H1 (cell line): ENCODE measurements at regions of chr5 and their contacts with region 1.

Region 1: GRCh38 chr5:122704243-122705036 is 70.4 kb upstream of the SNX2 start:
- DNase-seq: no peak
- H3K4me3 ChIP-seq: no peak overlapping the region
- H3K27ac ChIP-seq: no peak overlapping the region
- H3K4me1 ChIP-seq: no peaks in the 10 kb centered on the region
- H3K27me3 ChIP-seq: no peaks in the 10 kb centered on the region
- CTCF ChIP-seq: peak in 2 of 3 experiments; percentile 28 to 52; a peak in 2 of 4 replicates
- EP300 ChIP-seq: no peak
- POLR2A ChIP-seq: no peak
- RAD21 ChIP-seq: peak; percentile 43 to 50

Region 2: DNA sequence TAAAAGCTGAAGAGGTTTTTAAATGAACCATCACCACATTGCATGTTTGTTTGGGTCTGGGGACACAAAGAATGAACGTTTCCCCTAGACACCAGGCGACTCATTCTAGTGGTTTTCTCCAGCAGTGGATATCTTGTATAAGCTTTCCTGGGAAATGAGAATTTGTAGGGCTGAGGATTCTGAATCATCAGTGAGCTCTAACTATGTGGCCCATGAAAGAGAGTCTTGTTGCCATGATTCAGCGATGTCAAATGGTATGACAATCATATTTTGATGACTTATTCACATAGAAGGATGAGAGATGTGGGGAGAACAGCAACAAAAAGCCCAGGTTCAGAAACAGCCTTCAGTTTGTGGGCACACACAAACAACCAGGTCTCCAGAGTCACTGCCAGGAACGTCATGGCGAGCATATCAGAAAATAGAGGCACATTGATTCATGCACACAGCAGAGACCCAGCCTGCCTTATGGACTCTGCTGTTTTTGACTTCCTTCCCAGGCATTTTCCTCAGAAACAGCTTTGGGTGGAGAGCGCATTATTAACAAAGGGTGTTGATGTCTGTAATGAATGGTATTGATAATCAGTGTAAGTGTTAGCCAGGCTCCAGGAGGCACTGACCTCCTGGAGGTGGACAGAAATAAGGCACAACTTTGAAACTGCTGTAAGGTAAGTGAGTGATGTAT is 561.8 kb before region 1 on chr5:
- CTCF ChIA-PET with region 1: no interaction called
- POLR2A ChIA-PET with region 1: no interaction called
- DNase-seq: no peak
- H3K4me3 ChIP-seq: no peak overlapping the region
- H3K27ac ChIP-seq: no peak overlapping the region
- H3K4me1 ChIP-seq: no peaks in the 10 kb centered on the region
- H3K27me3 ChIP-seq: no peaks in the 10 kb centered on the region
- CTCF ChIP-seq: no peak
- EP300 ChIP-seq: no peak
- POLR2A ChIP-seq: no peak
- RAD21 ChIP-seq: no peak

Region 3: GRCh38 chr5:122507045-122507444 is 197.4 kb before region 1 on chr5:
- CTCF ChIA-PET with region 1: interaction called, 11 read pairs
- POLR2A ChIA-PET with region 1: no interaction called
- DNase-seq: no peak
- H3K4me3 ChIP-seq: no peak overlapping the region
- H3K27ac ChIP-seq: no peak overlapping the region
- H3K4me1 ChIP-seq: no peaks in the 10 kb centered on the region
- H3K27me3 ChIP-seq: no peaks in the 10 kb centered on the region
- CTCF ChIP-seq: no peak
- EP300 ChIP-seq: no peak
- POLR2A ChIP-seq: no peak
- RAD21 ChIP-seq: no peak

Region 4: GRCh38 chr5:122576256-122577016 is 128.0 kb before region 1 on chr5:
- CTCF ChIA-PET with region 1: interaction called, 12 read pairs
- POLR2A ChIA-PET with region 1: no interaction called
- DNase-seq: no peak
- H3K4me3 ChIP-seq: no peak overlapping the region
- H3K27ac ChIP-seq: no peak overlapping the region
- H3K4me1 ChIP-seq: peaks cover 0 to 2% (median 2%) of the 10 kb centered on the region in 4 experiments; a peak in 2 of 7 replicates
- H3K27me3 ChIP-seq: no peaks in the 10 kb centered on the region; a peak in 2 of 7 replicates
- CTCF ChIP-seq: no peak
- EP300 ChIP-seq: no peak
- POLR2A ChIP-seq: no peak
- RAD21 ChIP-seq: no peak

Region 5: DNA sequence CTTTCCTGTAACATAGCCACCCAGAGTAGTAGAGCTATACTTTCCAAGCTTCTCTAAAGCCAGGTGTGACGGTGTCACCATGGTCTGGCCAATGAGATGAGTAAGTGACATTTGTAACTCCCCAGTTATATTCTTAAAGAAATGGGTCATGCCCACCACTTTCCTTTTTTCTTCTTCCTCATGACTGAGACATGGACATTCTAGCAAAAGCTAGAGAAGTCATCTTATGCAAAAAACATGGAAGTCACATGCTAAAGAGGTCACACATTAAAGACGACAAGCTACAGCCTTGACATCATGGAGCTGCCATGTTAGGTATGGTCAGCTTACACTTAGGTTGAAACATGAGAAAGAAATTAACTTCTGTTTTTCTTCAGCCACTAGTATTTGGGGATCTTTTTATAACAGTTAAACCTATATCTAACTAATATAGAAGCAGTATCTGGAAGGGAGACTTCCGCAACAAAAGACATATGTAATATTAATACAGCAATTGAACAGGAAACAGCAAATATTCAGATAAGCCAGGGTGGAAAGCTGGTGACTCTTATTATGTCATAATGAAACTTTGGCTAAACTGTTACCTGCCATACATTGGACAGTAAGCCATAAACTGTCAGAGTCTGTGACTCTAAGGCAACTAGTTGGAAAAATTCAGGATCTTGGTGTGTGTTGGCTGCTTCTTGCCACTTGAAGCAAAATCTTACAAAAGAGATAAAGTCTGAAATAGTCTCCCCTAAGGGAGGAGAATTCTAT is 15.7 kb after region 1 on chr5:
- CTCF ChIA-PET with region 1: interaction called, 42 read pairs
- POLR2A ChIA-PET with region 1: no interaction called
- DNase-seq: no peak
- H3K4me3 ChIP-seq: no peak overlapping the region
- H3K27ac ChIP-seq: no peak overlapping the region
- H3K4me1 ChIP-seq: no peaks in the 10 kb centered on the region
- H3K27me3 ChIP-seq: no peaks in the 10 kb centered on the region
- CTCF ChIP-seq: no peak
- EP300 ChIP-seq: no peak
- POLR2A ChIP-seq: no peak
- RAD21 ChIP-seq: no peak

Region 6: DNA sequence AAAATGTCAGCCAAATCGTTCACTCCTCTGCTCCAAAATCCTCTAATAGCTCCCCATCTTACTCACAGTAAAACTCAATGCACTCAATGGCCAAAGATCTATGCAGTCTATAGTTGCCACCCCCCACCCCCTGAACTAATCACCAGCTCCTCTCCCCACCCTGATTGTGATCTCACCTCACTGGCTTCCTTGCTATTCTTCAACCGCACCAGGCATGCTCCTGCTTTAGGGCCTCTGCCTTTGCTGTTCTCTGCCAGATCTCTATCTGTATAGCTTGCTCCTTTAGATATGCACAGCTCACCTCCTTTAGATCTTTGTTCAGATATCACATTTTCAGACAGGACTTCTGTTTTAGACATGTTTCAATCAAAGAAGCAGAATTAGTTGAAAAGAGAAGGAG is 37.3 kb after region 1 on chr5:
- CTCF ChIA-PET with region 1: interaction called, 14 read pairs
- POLR2A ChIA-PET with region 1: no interaction called
- DNase-seq: no peak
- H3K4me3 ChIP-seq: no peak overlapping the region
- H3K27ac ChIP-seq: no peak overlapping the region
- H3K4me1 ChIP-seq: no peaks in the 10 kb centered on the region
- H3K27me3 ChIP-seq: no peaks in the 10 kb centered on the region
- CTCF ChIP-seq: no peak
- EP300 ChIP-seq: no peak
- POLR2A ChIP-seq: no peak
- RAD21 ChIP-seq: no peak